Activated CD4-positive, alpha-beta memory T cell treated with anti-CD3 and anti-CD28 coated beads, Interleukin-2, amount 10 ng/mL, durations not matched to agents 7 days and 5 days (primary cell): ENCODE measurements at regions of chr12 and their contacts with region 1.

Region 1: GRCh38 chr12:47812797-47813510 is 6.7 kb downstream of the HDAC7 start:
- DNase-seq: peak; percentile 96
- H3K4me3 Mint-ChIP-seq: peak overlapping the region; percentile 89
- H3K27ac Mint-ChIP-seq: peak overlapping the region; percentile 93
- H3K4me1 Mint-ChIP-seq: peaks cover 82% of the 10 kb centered on the region
- H3K27me3 Mint-ChIP-seq: no peaks in the 10 kb centered on the region

Region 2: DNA sequence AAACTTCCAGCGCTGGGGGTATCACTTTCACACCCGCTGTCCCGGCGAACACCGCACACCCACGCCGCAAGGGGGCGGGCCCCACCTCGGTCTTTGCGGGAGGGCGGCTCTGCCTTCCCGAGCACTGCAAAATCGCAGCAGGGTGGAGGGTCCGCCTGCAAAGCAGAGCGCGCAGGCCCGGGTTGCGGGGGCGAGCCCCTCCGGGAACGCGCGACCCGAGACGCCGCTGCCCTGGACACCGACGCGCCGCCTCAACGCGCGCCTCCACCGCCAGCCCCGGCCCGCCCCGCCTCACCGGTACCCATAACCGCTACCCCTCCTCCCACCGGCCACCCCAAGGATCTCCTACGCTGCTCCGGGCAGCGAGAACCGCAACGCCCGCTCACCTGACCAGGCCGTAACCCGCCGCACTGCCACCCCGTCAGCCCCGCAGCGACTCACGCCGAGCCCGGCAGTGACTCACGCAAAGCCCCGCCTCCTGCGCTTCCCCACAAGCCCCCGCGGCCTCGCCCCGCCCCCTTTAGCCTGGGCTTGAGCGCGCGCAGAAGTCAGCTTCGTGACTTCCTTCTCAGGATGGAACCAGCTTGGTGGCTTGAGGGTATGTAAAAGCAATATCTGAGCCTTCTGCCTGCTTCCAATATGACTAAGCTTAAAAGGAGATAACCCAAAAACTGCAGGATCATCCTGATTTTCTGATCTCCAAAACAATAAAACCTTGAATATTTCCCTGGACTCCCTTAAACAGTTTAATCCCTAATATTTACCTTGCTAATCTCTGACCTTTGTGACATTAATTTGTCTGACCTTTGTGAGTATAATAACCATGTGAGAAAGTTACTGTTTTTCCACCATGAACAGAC is 107.2 kb before region 1 on chr12 and contains the start of gene RPAP3:
- CTCF ChIA-PET with region 1: interaction called, 3 read pairs
- POLR2A ChIA-PET with region 1: interaction called, 19 read pairs
- DNase-seq: peak; percentile 98
- H3K4me3 Mint-ChIP-seq: peak within 1 kb of the TSS; percentile 95
- H3K27ac Mint-ChIP-seq: peak within 1 kb of the TSS; percentile 99
- H3K4me1 Mint-ChIP-seq: peaks cover 58% of the 10 kb centered on the region
- H3K27me3 Mint-ChIP-seq: no peaks in the 10 kb centered on the region
- total RNA-seq, gene RPAP3: 38.4 to 40.7 TPM

Region 3: GRCh38 chr12:47779301-47779942 is 33.5 kb before region 1 on chr12:
- CTCF ChIA-PET with region 1: interaction called, 34 read pairs
- POLR2A ChIA-PET with region 1: interaction called, 22 read pairs
- DNase-seq: peak; percentile 92
- H3K4me3 Mint-ChIP-seq: peak overlapping the region; percentile 24
- H3K27ac Mint-ChIP-seq: peak overlapping the region; percentile 65
- H3K4me1 Mint-ChIP-seq: peaks cover 49% of the 10 kb centered on the region
- H3K27me3 Mint-ChIP-seq: no peaks in the 10 kb centered on the region

Region 4: GRCh38 chr12:47797441-47797840 is 15.5 kb before region 1 on chr12:
- CTCF ChIA-PET with region 1: interaction called, 20 read pairs
- POLR2A ChIA-PET with region 1: interaction called, 264 read pairs
- DNase-seq: peak; percentile 46
- H3K4me3 Mint-ChIP-seq: no peak overlapping the region
- H3K27ac Mint-ChIP-seq: peak overlapping the region; percentile 49
- H3K4me1 Mint-ChIP-seq: peaks cover 31% of the 10 kb centered on the region
- H3K27me3 Mint-ChIP-seq: no peaks in the 10 kb centered on the region